Activated CD4-positive, alpha-beta memory T cell treated with anti-CD3 and anti-CD28 coated beads, Interleukin-2, amount 10 ng/mL, durations not matched to agents 7 days and 5 days (primary cell): ENCODE measurements at regions of chr6 and their contacts with region 1.

Region 1: GRCh38 chr6:83067448-83068413 is at the start of gene DOP1A:
- DNase-seq: peak; percentile 95
- H3K4me3 Mint-ChIP-seq: peak within 1 kb of the TSS; percentile 88
- H3K27ac Mint-ChIP-seq: peak within 1 kb of the TSS; percentile 71
- H3K4me1 Mint-ChIP-seq: peaks cover 43% of the 10 kb centered on the region
- H3K27me3 Mint-ChIP-seq: no peaks in the 10 kb centered on the region
- total RNA-seq, gene DOP1A: 12.5 to 13.3 TPM

Region 2: DNA sequence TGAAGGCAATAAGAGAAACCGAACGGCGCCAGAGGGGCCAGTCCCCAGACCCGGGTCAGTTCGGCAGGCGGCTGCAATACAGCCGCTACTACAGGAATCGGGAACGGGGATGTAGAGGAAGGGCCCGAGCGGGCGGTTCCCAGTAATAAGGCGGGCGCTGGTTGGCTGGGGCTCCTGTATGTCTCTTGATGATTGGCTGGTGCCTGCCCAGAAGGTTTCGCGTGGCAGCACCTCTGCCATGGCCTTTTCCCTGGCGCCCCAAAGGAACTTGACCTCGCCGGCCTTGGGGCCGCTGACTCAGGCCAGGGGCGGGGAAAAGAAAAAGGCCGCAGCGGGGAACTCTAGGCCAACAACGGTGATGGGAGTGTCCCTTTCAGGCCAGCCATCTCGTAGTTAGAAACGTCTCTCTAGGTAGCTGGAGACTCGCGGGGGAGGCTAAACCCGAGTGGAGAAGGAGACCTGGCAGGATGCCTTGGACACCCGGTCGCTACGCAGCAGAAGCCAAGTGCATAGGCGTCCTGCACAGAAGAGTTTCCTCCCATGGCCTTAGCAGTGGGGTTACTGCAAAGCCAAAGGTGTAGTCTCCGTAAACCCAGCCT is 820.0 kb before region 1 on chr6 and contains the start of gene IBTK:
- CTCF ChIA-PET with region 1: interaction called, 33 read pairs
- POLR2A ChIA-PET with region 1: interaction called, 9 read pairs
- DNase-seq: peak; percentile 92
- H3K4me3 Mint-ChIP-seq: peak within 1 kb of the TSS; percentile 92
- H3K27ac Mint-ChIP-seq: peak within 1 kb of the TSS; percentile 89
- H3K4me1 Mint-ChIP-seq: peaks cover 36% of the 10 kb centered on the region
- H3K27me3 Mint-ChIP-seq: no peaks in the 10 kb centered on the region
- total RNA-seq, gene IBTK: 33.7 to 34.7 TPM

Region 3: DNA sequence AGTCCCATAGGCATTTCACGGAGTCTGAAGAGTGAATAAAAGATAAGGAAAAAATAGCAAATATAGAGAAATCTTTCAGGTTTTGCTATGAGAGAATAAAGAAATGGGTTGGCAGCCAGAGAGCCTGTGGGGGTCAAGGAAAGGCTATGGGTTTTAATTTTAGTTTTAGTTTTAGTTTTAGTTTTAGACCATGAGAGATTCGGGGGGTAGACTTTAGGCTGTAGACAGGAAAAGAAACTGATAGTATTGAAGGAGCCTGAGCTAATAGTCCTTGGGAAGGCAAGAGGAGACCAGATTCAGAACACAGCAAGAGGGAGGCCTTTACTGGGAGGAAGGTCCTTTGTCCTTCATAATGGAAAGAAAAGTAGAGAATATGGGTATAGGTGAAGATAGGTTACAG is 19.0 kb after region 1 on chr6:
- CTCF ChIA-PET with region 1: interaction called, 62 read pairs
- POLR2A ChIA-PET with region 1: no interaction called
- DNase-seq: no peak
- H3K4me3 Mint-ChIP-seq: peak overlapping the region; percentile 58
- H3K27ac Mint-ChIP-seq: peak overlapping the region; percentile 70
- H3K4me1 Mint-ChIP-seq: peaks cover 22% of the 10 kb centered on the region
- H3K27me3 Mint-ChIP-seq: no peaks in the 10 kb centered on the region

Region 4: GRCh38 chr6:83153883-83154521 is 86.3 kb after region 1 on chr6:
- CTCF ChIA-PET with region 1: interaction called, 20 read pairs
- POLR2A ChIA-PET with region 1: no interaction called
- DNase-seq: no peak
- H3K4me3 Mint-ChIP-seq: no peak overlapping the region
- H3K27ac Mint-ChIP-seq: no peak overlapping the region
- H3K4me1 Mint-ChIP-seq: no peaks in the 10 kb centered on the region
- H3K27me3 Mint-ChIP-seq: no peaks in the 10 kb centered on the region

Region 5: DNA sequence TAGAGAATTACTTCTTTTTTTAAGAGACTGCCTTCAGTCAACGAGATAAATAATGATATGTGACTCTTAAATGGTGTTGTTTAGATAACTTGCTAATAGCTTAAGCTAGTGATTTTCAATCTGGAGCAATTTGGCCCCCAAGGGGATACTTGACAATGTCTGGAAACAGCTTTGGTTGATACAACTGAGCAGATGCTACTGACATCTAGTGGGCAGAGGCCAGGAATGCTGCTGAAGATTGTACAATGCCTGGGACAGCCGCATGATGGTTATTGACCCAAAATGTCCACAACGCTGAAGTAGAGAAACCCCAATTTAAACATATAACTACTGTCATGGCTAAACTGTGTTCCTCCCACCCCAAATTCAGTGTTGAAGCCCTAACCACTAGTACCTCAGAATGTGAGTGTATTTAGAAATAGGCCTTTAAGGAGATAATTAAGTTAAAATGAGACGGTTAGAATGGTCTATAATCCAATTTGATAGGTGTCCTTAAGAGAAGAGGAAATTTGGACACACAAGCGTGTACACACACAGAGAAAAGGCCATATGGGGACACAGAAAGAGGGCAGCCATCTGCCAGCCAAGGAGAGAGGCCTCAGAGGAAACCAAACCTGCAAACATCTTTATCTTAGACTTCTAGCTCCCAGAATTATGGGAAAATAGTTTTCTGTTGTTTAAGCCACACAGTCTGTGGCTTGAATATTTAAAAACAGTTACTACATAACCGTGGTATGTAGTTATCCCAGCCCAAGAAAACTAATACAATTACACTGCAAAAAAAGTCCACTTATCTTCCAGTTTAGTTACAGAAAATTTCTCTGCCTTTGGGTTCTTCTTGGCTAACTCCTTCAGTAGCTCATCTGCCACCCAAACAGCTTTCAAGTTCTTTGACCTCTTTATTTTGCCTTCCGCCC is 147.7 kb after region 1 on chr6:
- CTCF ChIA-PET with region 1: interaction called, 228 read pairs
- POLR2A ChIA-PET with region 1: interaction called, 9 read pairs
- DNase-seq: peak; percentile 68
- H3K4me3 Mint-ChIP-seq: no peak overlapping the region
- H3K27ac Mint-ChIP-seq: no peak overlapping the region
- H3K4me1 Mint-ChIP-seq: no peaks in the 10 kb centered on the region
- H3K27me3 Mint-ChIP-seq: peaks cover 17% of the 10 kb centered on the region